Activated naive CD4-positive, alpha-beta T cell treated with anti-CD3 and anti-CD28 coated beads for 36 hours (primary cell): ENCODE measurements at regions of chr6 and their contacts with region 1.

Region 1: GRCh38 chr6:150334790-150335783 is 33.7 kb upstream of the IYD start:
- DNase-seq: peak; percentile 64
- H3K4me3 Mint-ChIP-seq: no peak overlapping the region
- H3K27ac Mint-ChIP-seq: no peak overlapping the region
- H3K4me1 Mint-ChIP-seq: no peaks in the 10 kb centered on the region
- H3K27me3 Mint-ChIP-seq: peaks cover 2% of the 10 kb centered on the region

Region 2: DNA sequence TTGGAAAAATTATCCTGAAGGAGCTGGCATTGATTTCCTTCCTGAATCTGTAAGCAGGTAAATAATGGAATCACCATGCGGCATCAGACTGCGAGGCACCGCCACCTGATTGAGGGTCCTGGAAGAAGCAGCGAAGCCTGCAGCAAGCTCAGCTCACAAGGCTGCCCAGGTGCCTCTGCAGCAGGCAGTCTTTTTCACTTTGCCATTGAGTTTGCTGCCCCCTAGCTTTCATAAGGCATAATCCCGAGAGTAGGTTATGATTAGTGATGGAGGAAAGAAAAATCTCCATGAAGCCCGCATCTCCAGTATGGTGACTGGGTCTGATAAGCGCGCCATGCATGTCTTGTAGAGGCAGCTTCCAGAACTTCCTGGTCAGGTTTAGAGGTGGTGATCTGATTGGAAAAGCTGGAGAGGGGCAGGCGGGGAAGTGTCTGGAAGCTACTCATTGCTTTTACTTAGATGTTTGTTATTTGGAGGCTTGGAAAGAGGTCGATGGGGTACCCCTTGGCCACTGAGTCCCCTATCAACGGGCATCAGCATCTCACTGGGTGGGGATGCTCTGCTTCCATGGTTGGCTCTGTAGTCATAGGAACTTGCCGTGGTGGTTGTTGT is 60.4 kb after region 1 on chr6:
- CTCF ChIA-PET with region 1: no interaction called
- intact Hi-C with region 1: loop called (anchors 5 kb)
- DNase-seq: peak; percentile 59
- H3K4me3 Mint-ChIP-seq: no peak overlapping the region
- H3K27ac Mint-ChIP-seq: no peak overlapping the region
- H3K4me1 Mint-ChIP-seq: no peaks in the 10 kb centered on the region
- H3K27me3 Mint-ChIP-seq: peaks cover 8% of the 10 kb centered on the region